GM12878 (cell line): ENCODE measurements at regions of chr22 and their contacts with region 1.

Region 1: GRCh38 chr22:27405672-27406388 is 395.7 kb downstream of the MN1 start:
- DNase-seq: no peak
- ATAC-seq: peak; percentile 67
- H3K4me3 ChIP-seq: no peak overlapping the region
- H3K27ac ChIP-seq: no peak overlapping the region
- H3K4me1 ChIP-seq: no peaks in the 10 kb centered on the region
- H3K27me3 ChIP-seq: no peaks in the 10 kb centered on the region
- CTCF ChIP-seq: peak; percentile 32 to 54 (median 35); a peak in 5 of 6 replicates
- EP300 ChIP-seq: no peak
- POLR2A ChIP-seq: no peak
- RAD21 ChIP-seq: no peak

Region 2: GRCh38 chr22:27804470-27805297 is 398.9 kb after region 1 on chr22:
- CTCF ChIA-PET with region 1: no interaction called
- POLR2A ChIA-PET with region 1: no interaction called
- RAD21 ChIA-PET with region 1: no interaction called
- SMC1A ChIA-PET with region 1: no interaction called
- in situ Hi-C with region 1: no loop called
- intact Hi-C with region 1: loop called (anchors 5 kb)
- DNase-seq: no peak
- ATAC-seq: peak; percentile 90
- H3K4me3 ChIP-seq: no peak overlapping the region
- H3K27ac ChIP-seq: no peak overlapping the region
- H3K4me1 ChIP-seq: no peaks in the 10 kb centered on the region
- H3K27me3 ChIP-seq: peaks cover 0 to 6% of the 10 kb centered on the region in 2 experiments; a peak in 3 of 4 replicates
- CTCF ChIP-seq: peak; percentile 45 to 63 (median 60)
- EP300 ChIP-seq: no peak
- POLR2A ChIP-seq: no peak
- RAD21 ChIP-seq: peak; percentile 54

Region 3: DNA sequence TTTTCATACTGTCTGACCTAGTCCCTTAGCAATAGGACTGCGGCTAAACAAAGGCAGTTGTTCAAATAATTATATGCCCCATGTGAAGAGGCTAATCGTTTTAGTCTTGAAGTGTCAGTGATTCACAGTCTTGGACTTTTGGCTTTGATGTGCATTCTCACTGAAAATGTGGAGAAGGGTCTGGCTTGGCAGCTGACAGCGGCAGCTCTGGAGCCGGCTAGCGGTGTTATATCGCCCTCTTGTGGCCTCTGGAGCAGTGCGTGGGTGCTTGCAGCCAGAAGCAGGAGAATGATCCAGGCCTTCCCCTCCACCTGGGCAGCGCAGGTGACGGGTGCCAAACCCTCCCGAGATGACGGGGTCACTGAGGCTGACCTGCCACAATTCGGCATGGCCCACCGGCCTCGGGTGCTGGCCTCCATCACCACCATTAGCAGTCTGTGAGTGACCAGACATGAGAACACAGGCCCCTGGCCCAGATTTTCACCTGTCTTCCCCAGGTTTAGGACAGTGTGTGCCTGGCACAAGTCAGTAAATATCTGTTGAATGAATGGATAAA is 603.5 kb after region 1 on chr22:
- CTCF ChIA-PET with region 1: no interaction called
- POLR2A ChIA-PET with region 1: no interaction called
- RAD21 ChIA-PET with region 1: no interaction called
- SMC1A ChIA-PET with region 1: no interaction called
- in situ Hi-C with region 1: loop called (anchors 10 kb)
- intact Hi-C with region 1: loop called (anchors 5 kb)
- DNase-seq: peak; percentile 9
- ATAC-seq: peak; percentile 97
- H3K4me3 ChIP-seq: no peak overlapping the region
- H3K27ac ChIP-seq: no peak overlapping the region
- H3K4me1 ChIP-seq: no peaks in the 10 kb centered on the region
- H3K27me3 ChIP-seq: no peaks in the 10 kb centered on the region
- CTCF ChIP-seq: peak; percentile 93 to 98 (median 95)
- EP300 ChIP-seq: no peak
- POLR2A ChIP-seq: no peak
- RAD21 ChIP-seq: peak; percentile 90

Region 4: DNA sequence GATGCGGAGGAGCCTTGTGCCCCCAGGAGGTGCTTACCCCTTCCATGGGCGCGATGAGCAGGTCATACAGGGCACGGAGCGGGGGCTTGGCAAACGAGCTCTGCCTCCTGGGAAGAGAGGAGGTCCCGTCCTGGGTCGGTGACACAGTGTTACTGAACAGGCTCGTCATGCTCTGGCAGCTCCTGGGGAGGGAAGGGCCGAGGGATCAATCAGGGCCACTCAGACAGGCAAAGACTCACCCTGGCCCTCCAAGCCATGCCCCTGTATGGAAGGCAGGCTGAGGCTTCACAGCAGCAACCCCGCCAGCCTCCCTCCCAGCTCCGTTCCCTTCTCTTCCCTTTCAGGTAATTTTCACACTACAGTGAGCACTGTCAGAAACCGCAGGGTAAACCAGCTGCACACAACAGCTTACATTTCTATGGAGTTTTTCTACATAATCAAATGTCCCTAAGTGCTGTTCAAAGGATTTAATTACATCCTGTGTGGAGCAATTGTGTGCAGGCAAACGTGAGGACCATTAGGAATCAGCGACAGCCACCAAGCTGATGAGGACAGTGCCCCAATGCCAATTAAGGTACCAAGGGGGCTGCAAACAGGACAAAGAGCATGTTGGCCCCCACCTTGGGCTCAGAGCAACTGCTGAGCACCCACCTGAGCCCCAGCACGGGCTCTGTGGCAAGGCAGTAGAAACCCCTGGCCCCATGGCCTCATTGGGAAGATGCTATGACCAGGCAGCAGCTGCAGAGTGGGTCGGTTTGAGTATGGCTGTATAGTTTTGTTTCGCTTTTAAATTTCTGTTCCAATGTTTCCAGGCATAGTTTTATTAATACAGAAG is 608.6 kb after region 1 on chr22:
- CTCF ChIA-PET with region 1: no interaction called
- POLR2A ChIA-PET with region 1: no interaction called
- RAD21 ChIA-PET with region 1: no interaction called
- SMC1A ChIA-PET with region 1: no interaction called
- in situ Hi-C with region 1: loop called (anchors 10 kb)
- intact Hi-C with region 1: loop called (anchors 5 kb)
- DNase-seq: no peak
- ATAC-seq: no peak
- H3K4me3 ChIP-seq: no peak overlapping the region
- H3K27ac ChIP-seq: no peak overlapping the region
- H3K4me1 ChIP-seq: no peaks in the 10 kb centered on the region
- H3K27me3 ChIP-seq: no peaks in the 10 kb centered on the region
- CTCF ChIP-seq: no peak
- EP300 ChIP-seq: no peak
- POLR2A ChIP-seq: no peak
- RAD21 ChIP-seq: no peak